ENCODE measurements at regions of chr1 and their contacts with region 1.

Region 1: GRCh38 chr1:222077206-222077605 is 335.3 kb upstream of the DUSP10 start:
- DNase-seq: no peak
- H3K4me3 ChIP-seq: no peak overlapping the region
- H3K27ac ChIP-seq: no peak overlapping the region
- H3K4me1 ChIP-seq: no peaks in the 10 kb centered on the region
- H3K27me3 ChIP-seq: no peaks in the 10 kb centered on the region
- CTCF ChIP-seq: no peak
- EP300 ChIP-seq: no peak
- POLR2A ChIP-seq: no peak

Region 2: GRCh38 chr1:222034790-222035189 is 42.4 kb before region 1 on chr1:
- in situ Hi-C with region 1: no loop called
- intact Hi-C with region 1: no loop called
- DNase-seq: no peak
- H3K4me3 ChIP-seq: no peak overlapping the region
- H3K27ac ChIP-seq: no peak overlapping the region
- H3K4me1 ChIP-seq: no peaks in the 10 kb centered on the region
- H3K27me3 ChIP-seq: no peaks in the 10 kb centered on the region
- CTCF ChIP-seq: no peak
- EP300 ChIP-seq: no peak
- POLR2A ChIP-seq: no peak

Region 3: DNA sequence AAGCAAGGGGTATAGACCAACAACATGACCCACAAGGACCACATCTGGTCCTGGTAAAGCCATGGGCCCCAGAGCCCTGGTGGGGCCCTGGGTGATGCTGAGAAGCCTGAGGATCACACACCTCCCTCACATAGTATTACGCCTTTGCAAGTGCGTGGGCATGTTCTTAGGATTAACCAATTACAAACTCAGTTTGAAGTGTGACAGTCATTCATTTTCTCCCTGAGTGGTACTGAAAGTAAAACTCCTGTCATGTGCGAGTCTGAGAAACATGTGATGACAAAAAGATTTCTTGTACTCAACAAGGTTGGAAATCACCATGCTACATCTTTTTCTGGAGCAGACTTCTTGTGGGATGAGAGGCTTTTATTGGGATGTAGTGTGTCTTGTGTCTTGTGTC is 20.0 kb before region 1 on chr1:
- in situ Hi-C with region 1: no loop called
- intact Hi-C with region 1: loop called (anchors 1 kb)
- DNase-seq: no peak
- H3K4me3 ChIP-seq: no peak overlapping the region
- H3K27ac ChIP-seq: no peak overlapping the region
- H3K4me1 ChIP-seq: no peaks in the 10 kb centered on the region
- H3K27me3 ChIP-seq: no peaks in the 10 kb centered on the region
- CTCF ChIP-seq: no peak
- EP300 ChIP-seq: no peak
- POLR2A ChIP-seq: no peak

Region 4: GRCh38 chr1:223123011-223123610 is 1045.9 kb after region 1 on chr1:
- in situ Hi-C with region 1: no loop called
- intact Hi-C with region 1: no loop called
- DNase-seq: no peak
- H3K4me3 ChIP-seq: peak overlapping the region in 3 of 4 donors; percentile 10 to 44 (median 19)
- H3K27ac ChIP-seq: no peak overlapping the region
- H3K4me1 ChIP-seq: peaks cover 0 to 7% (median 1%) of the 10 kb centered on the region in 4 donors
- H3K27me3 ChIP-seq: no peaks in the 10 kb centered on the region
- CTCF ChIP-seq: no peak
- EP300 ChIP-seq: no peak
- POLR2A ChIP-seq: no peak

Measured in transverse colon (tissue), 4 donors.